Endothelial cell of umbilical vein (primary cell): ENCODE measurements at regions of chr2 and their contacts with region 1.

Region 1: DNA sequence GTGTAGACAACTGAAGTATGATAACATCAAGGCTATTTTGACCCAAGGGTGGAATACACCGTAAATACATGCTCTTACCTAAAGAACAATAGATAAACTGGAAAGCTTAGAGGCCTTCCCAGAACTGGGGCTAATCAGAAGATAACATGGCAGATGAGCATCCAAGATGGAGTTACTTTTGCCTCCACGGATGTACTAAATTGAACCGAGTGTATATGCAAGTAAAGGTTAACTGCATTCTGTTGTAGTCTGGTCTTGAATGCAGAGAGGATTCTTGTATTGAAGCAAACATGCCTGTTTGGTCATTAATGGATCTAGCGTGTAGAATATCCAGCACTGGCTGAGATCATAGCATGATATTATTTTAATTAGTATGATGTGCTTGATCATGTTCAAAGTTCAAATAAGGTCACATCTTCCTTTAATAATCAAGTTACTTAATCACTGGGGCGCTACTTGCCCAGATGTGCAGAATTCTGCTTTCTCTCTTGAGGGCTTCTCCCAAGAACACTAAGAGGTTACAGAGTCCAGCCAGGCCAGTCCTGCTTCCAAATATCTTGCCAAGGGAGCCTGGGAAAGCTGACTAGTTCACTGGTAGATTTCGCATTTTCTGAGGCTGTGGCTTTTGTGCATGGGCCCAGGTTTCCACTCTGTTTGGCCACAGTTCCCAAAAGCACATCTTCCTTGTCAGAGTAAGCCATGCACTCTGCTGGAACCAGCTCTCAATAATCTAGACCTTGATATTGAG is 37.5 kb upstream of the ACSL3 start:
- DNase-seq: no peak
- H3K4me3 ChIP-seq: no peak overlapping the region
- H3K27ac ChIP-seq: no peak overlapping the region
- H3K4me1 ChIP-seq: no peaks in the 10 kb centered on the region
- H3K27me3 ChIP-seq: peaks cover 6 to 8% of the 10 kb centered on the region in 2 experiments
- CTCF ChIP-seq: no peak
- POLR2A ChIP-seq: no peak

Region 2: DNA sequence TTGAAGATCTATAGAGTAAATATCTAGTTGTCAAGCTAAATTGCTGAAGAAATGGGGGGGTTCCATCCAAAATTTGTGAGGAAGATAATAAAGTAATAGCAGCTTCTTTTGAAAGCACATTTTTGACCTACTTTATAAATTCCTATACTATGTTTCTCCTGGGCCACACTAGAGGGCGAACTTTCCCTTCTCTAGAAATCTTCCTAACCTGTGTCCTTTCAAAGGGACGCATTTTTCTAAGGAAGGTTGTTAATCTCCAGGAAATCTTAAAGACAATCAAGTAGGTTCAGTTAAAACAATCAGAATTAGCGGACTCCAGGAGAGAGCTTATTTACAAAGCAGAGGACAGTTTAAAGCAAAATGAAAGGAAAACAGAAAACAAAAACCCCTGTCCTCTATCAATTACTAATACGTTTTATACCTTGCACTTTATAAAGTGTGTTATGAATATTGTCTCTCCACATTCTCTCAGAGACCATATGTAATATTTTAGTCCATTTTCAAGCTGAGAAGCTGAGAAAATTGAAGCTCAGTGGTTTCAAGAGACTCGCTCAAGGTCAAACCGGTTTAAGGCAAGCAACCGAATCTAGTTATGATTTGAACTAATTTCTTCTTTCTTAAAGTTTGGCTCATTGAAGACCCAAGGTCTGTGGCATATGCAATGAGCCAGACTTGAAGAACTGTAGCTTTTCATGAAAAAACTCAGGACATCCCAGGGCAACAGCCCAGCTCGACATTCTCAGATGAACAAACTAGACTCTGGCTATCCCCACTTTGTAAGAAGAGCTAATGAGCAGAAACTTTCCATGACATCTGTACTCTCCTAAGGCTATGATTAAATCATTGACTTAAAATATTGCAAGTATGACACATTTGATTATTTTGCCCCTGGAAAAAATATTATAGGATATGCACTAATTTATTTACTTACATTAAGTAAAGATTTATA is 798.2 kb before region 1 on chr2:
- CTCF ChIA-PET with region 1: no interaction called
- POLR2A ChIA-PET with region 1: no interaction called
- dilution Hi-C with region 1: no loop called
- intact Hi-C with region 1: no loop called
- DNase-seq: peak; percentile 50
- H3K4me3 ChIP-seq: no peak overlapping the region
- H3K27ac ChIP-seq: no peak overlapping the region
- H3K4me1 ChIP-seq: no peaks in the 10 kb centered on the region
- H3K27me3 ChIP-seq: peaks cover 0 to 8% of the 10 kb centered on the region in 2 experiments
- CTCF ChIP-seq: peak; percentile 24 to 45
- POLR2A ChIP-seq: no peak

Region 3: DNA sequence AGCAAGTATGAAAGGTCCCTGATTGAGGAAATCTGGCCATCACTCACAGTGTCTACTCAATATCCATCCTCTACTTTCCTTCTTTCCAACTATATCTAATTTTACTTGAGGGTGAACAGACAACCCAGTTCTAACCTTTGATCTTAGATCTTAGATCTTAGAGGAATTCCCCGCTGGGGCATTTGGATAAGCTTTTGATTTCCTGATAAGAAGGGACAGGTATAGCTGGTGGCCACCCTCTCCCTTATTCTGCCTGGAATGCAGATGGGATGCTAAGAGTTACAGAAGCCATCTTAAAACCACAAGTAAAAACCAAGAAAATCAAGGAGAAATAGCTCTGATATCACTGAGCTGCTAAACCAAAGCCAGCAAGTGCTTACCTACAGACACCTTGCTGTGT is 39.8 kb before region 1 on chr2:
- CTCF ChIA-PET with region 1: no interaction called
- POLR2A ChIA-PET with region 1: no interaction called
- dilution Hi-C with region 1: no loop called
- intact Hi-C with region 1: loop called (anchors 1 kb)
- DNase-seq: no peak
- H3K4me3 ChIP-seq: no peak overlapping the region
- H3K27ac ChIP-seq: no peak overlapping the region
- H3K4me1 ChIP-seq: no peaks in the 10 kb centered on the region
- H3K27me3 ChIP-seq: no peaks in the 10 kb centered on the region
- CTCF ChIP-seq: no peak
- POLR2A ChIP-seq: no peak